ENCODE measurements at regions of chr21 and their contacts with region 1.

Region 1: DNA sequence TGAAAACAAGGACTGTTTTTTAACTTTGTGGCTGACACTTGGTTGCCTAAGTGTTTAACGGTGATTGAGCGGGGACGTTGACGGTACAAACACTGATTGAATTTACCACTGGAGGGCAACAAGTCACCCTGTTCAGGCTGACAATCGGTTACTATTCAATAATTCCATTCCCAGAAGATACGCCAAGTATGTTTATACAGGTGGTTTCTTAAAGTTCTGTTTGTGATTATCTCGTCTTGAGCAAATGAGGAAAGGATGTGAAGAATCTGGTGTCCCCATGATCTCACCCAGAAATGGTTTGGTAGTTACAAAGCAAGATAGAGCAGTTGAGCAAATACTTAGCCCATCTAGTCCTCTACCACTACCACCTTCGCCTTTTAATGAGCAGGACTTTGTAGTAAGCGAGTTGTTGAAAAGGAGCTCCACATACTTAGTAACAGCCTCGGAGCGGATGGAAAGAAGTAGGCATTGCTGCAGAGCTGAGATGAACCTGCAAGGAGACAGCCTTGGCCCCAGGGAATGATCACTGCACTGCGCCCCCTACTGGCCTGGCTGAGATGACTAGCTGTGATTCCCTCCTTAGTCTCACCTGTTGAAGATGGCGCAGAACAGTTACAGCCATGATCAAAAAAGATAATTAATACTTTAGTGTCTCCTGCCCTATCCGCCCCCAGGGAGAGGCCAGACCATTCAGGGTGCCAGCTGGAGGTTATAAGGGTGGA is 36.3 kb downstream of the IFNAR1 start:
- DNase-seq: peak; percentile 71 to 75 (median 71)
- H3K4me3 ChIP-seq: peak overlapping the region; percentile 12 to 70 (median 14)
- H3K4me3 Mint-ChIP-seq: peak overlapping the region; percentile 74 to 88
- H3K27ac ChIP-seq: peak overlapping the region; percentile 81 to 94
- H3K27ac Mint-ChIP-seq: peak overlapping the region; percentile 95 to 99 (median 99)
- H3K4me1 ChIP-seq: peaks cover 50 to 53% of the 10 kb centered on the region in 2 donors
- H3K4me1 Mint-ChIP-seq: peaks cover 49% of the 10 kb centered on the region
- H3K27me3 ChIP-seq: no peaks in the 10 kb centered on the region
- H3K27me3 Mint-ChIP-seq: peaks cover 0 to 4% (median 0%) of the 10 kb centered on the region in 3 donors
- CTCF ChIP-seq: peak; percentile 93

Region 2: DNA sequence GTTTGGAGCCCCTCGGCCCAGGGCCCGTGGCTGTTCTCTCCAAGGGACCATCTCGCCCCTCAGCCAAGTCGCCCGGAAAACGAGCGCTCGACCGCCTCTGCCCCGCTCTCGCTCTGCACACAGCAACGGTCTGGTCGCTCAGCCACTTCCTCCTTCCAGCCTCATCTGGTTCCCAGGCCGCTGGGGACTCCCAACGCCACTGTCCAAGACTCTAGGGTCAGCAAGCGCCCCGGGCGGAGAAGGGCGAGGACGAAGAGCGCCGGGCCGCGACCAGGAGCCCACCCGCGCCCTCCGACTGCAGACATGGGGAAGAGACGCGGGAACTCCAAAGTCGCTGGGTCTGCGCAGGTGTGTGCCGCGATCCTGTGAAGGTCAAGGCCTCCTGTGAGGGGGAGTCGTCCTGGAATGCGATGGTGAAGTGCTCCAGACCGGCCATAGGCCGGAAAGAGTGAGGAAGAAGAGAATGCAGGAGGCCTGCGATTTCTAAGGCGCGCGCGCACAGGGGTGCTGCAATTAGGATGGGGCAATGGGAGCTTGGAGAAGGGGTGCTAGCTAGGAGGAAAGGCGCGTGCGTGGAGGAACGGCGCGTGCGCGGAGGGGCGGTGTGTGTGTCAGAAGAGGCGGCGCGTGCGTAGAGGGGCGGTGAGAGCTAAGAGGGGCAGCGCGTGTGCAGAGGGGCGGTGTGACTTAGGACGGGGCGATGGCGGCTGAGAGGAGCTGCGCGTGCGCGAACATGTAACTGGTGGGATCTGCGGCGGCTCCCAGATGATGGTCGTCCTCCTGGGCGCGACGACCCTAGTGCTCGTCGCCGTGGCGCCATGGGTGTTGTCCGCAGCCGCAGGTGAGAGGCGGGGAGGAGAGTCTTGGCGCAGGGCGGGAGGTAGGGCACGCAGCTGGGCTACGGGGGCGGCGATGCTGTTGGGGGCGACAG is 36.5 kb before region 1 on chr21 and contains the start of gene IFNAR1:
- intact Hi-C with region 1: loop called in 1 of 2 experiments (anchors 5 kb)
- DNase-seq: peak; percentile 98 to 99 (median 99)
- H3K4me3 ChIP-seq: peak within 1 kb of the TSS; percentile 83 to 94 (median 89)
- H3K4me3 Mint-ChIP-seq: no peak within 1 kb of the TSS
- H3K27ac ChIP-seq: peak within 1 kb of the TSS; percentile 99 to 100
- H3K27ac Mint-ChIP-seq: no peak within 1 kb of the TSS
- H3K4me1 ChIP-seq: peaks cover 30 to 43% of the 10 kb centered on the region in 2 donors
- H3K4me1 Mint-ChIP-seq: peaks cover 27% of the 10 kb centered on the region
- H3K27me3 ChIP-seq: no peaks in the 10 kb centered on the region
- H3K27me3 Mint-ChIP-seq: peaks cover 0 to 3% (median 0%) of the 10 kb centered on the region in 3 donors
- CTCF ChIP-seq: no peak
- polyA plus RNA-seq, gene IFNAR1: 16.8 to 95.3 (median 56.2) TPM

Region 3: GRCh38 chr21:33374450-33375096 is 13.5 kb after region 1 on chr21:
- intact Hi-C with region 1: loop called in 1 of 2 experiments (anchors 1 kb)
- DNase-seq: peak; percentile 90 to 94 (median 93)
- H3K4me3 ChIP-seq: peak overlapping the region in 1 of 3 experiments; percentile 55
- H3K4me3 Mint-ChIP-seq: peak overlapping the region; percentile 22 to 27
- H3K27ac ChIP-seq: peak overlapping the region; percentile 77 to 93
- H3K27ac Mint-ChIP-seq: peak overlapping the region; percentile 94 to 98 (median 96)
- H3K4me1 ChIP-seq: peaks cover 76 to 86% of the 10 kb centered on the region in 2 donors
- H3K4me1 Mint-ChIP-seq: peaks cover 66% of the 10 kb centered on the region
- H3K27me3 ChIP-seq: no peaks in the 10 kb centered on the region
- H3K27me3 Mint-ChIP-seq: no peaks in the 10 kb centered on the region
- CTCF ChIP-seq: peak; percentile 84

Region 4: DNA sequence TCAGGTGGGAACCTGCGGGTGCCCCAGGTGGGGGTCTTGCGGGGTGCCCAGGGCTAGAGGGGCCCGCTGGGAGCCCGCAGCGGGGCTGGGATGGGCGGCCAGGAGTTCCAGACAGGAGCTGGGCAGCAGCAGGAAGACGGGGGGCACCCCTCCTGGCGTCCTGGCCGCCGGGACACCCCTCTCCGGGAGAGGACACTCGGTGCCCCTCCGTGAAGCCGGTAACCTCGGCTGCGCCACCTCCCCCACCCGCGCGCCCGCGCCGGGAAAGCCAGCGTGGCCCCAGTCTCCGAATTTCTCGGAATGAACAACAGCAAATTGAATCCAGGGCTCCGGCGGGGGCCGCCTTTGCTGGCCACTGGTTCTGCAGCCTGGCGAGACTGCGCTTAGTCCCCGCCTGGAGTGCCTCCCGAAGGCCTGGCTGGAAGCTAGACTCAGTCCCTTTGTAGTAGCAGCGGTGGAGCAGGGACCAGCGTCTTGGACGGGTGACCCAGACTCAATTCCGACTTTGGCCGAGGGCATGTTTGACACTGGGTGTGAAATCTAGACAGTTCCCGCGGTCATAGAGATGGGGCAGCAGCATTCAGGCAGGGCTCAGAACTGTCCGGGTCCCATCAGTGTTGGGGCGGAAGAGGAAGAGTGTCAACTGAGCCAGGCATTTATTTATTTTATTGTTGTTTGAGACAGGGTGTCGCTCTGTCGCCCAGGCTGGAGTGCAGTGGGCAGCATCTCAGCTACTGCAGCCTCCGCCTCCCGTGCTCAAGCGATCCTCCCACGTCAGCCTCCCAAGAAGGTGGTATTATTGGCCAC is 42.9 kb after region 1 on chr21:
- intact Hi-C with region 1: loop called (anchors 2 to 5 kb)
- DNase-seq: peak; percentile 41 to 50 (median 48)
- H3K4me3 ChIP-seq: peak overlapping the region; percentile 83 to 100 (median 99)
- H3K4me3 Mint-ChIP-seq: peak overlapping the region; percentile 99 to 100
- H3K27ac ChIP-seq: peak overlapping the region; percentile 98 to 100
- H3K27ac Mint-ChIP-seq: peak overlapping the region; percentile 98 to 100 (median 99)
- H3K4me1 ChIP-seq: peaks cover 81 to 83% of the 10 kb centered on the region in 2 donors
- H3K4me1 Mint-ChIP-seq: peaks cover 66% of the 10 kb centered on the region
- H3K27me3 ChIP-seq: no peaks in the 10 kb centered on the region
- H3K27me3 Mint-ChIP-seq: no peaks in the 10 kb centered on the region
- CTCF ChIP-seq: no peak

Region 5: GRCh38 chr21:33434770-33435360 is 73.8 kb after region 1 on chr21:
- intact Hi-C with region 1: loop called in 1 of 2 experiments (anchors 5 kb)
- DNase-seq: peak; percentile 84 to 96 (median 93)
- H3K4me3 ChIP-seq: no peak overlapping the region
- H3K4me3 Mint-ChIP-seq: no peak overlapping the region
- H3K27ac ChIP-seq: peak overlapping the region; percentile 74 to 78
- H3K27ac Mint-ChIP-seq: peak overlapping the region; percentile 89 to 97 (median 95)
- H3K4me1 ChIP-seq: peaks cover 42 to 50% of the 10 kb centered on the region in 2 donors
- H3K4me1 Mint-ChIP-seq: peaks cover 45% of the 10 kb centered on the region
- H3K27me3 ChIP-seq: no peaks in the 10 kb centered on the region
- H3K27me3 Mint-ChIP-seq: peaks cover 0 to 2% (median 2%) of the 10 kb centered on the region in 3 donors
- CTCF ChIP-seq: no peak

Region 6: GRCh38 chr21:33668180-33668579 is 307.1 kb after region 1 on chr21:
- intact Hi-C with region 1: no loop called
- DNase-seq: no peak
- H3K4me3 ChIP-seq: no peak overlapping the region
- H3K4me3 Mint-ChIP-seq: no peak overlapping the region
- H3K27ac ChIP-seq: no peak overlapping the region
- H3K27ac Mint-ChIP-seq: peak overlapping the region in 1 of 7 donors; percentile 46
- H3K4me1 ChIP-seq: peaks cover 4 to 6% of the 10 kb centered on the region in 2 donors
- H3K4me1 Mint-ChIP-seq: peaks cover 15% of the 10 kb centered on the region
- H3K27me3 ChIP-seq: no peaks in the 10 kb centered on the region
- H3K27me3 Mint-ChIP-seq: no peaks in the 10 kb centered on the region
- CTCF ChIP-seq: no peak